ENCODE measurements at regions of chr7 and their contacts with region 1.

Region 1: DNA sequence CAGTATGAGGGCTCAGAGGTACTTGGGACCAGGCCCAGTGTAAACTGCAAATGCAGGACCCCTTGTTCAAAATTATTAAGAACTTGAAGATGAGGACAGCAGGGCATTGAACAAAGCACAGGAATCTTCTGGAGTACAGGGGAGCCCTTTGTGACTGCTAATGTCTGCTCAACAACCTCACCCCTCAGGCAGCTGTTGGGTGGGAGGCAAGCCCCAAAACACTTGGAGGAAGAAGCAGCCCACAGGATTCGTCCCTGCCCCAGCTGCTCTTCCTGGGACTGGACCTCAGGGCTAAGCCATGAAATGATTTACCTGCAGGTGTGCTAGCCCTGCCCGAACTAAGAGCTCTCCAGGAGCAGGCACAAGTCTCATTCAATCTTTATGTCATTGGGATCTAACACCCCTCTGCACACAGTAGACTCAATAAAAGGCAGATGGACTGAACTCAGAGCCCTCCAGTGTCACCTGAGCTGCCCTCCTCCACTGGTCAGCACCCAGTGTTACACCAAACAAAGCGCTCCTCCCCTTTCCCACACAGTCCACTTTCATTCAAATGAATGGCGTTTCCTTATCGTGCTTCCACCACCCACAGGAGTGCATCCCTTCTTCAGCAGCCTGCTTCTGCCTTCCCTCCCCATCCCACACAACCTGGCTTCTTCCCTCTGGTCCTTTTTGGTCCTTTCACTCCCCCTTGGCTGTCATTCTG is 1.0 kb downstream of the TRPV5 start:
- DNase-seq: no peak
- H3K4me3 ChIP-seq: no peak overlapping the region
- H3K27ac ChIP-seq: no peak overlapping the region
- H3K4me1 ChIP-seq: peaks cover 0 to 5% (median 2%) of the 10 kb centered on the region in 4 experiments; a peak in 3 of 7 replicates
- H3K27me3 ChIP-seq: no peaks in the 10 kb centered on the region; a peak in 2 of 7 replicates
- CTCF ChIP-seq: no peak
- EP300 ChIP-seq: no peak
- POLR2A ChIP-seq: no peak
- RAD21 ChIP-seq: no peak

Region 2: GRCh38 chr7:142357953-142358520 is 574.5 kb before region 1 on chr7:
- CTCF ChIA-PET with region 1: no interaction called
- POLR2A ChIA-PET with region 1: no interaction called
- DNase-seq: peak in 1 of 2 experiments; percentile 56
- H3K4me3 ChIP-seq: no peak overlapping the region
- H3K27ac ChIP-seq: no peak overlapping the region
- H3K4me1 ChIP-seq: peaks cover 5 to 13% (median 9%) of the 10 kb centered on the region in 4 experiments; a peak in 5 of 7 replicates
- H3K27me3 ChIP-seq: no peaks in the 10 kb centered on the region
- CTCF ChIP-seq: peak; percentile 32 to 86 (median 86)
- EP300 ChIP-seq: no peak
- POLR2A ChIP-seq: no peak
- RAD21 ChIP-seq: peak; percentile 78 to 88

Region 3: GRCh38 chr7:142908921-142909890 is 23.3 kb before region 1 on chr7:
- CTCF ChIA-PET with region 1: interaction called, 13 read pairs
- POLR2A ChIA-PET with region 1: interaction called, 3 read pairs
- DNase-seq: no peak
- H3K4me3 ChIP-seq: no peak overlapping the region
- H3K27ac ChIP-seq: no peak overlapping the region
- H3K4me1 ChIP-seq: no peaks in the 10 kb centered on the region
- H3K27me3 ChIP-seq: no peaks in the 10 kb centered on the region
- CTCF ChIP-seq: peak; percentile 41 to 72 (median 53)
- EP300 ChIP-seq: no peak
- POLR2A ChIP-seq: no peak
- RAD21 ChIP-seq: peak; percentile 43 to 55

Region 4: DNA sequence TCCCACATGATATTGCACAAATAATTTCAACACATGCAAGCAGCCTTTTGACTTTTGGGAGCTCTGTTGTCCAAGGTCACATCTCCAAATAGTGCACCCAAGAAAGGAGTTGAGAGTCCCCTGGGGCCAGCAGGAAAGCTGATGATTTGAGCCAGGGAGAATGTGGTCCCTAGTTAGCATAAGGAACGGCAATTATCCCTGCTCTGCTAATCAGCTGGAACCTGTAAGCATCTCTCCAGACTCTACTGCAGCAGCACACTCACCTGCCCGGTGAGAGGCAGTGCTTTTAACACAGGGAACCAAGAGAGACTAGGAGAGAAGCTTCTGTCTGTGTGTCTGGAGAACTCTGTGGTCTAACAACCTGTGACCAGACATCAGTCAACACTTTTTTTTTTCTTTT is 16.0 kb before region 1 on chr7:
- CTCF ChIA-PET with region 1: interaction called, 13 read pairs
- POLR2A ChIA-PET with region 1: interaction called, 3 read pairs
- DNase-seq: no peak
- H3K4me3 ChIP-seq: no peak overlapping the region
- H3K27ac ChIP-seq: no peak overlapping the region
- H3K4me1 ChIP-seq: no peaks in the 10 kb centered on the region
- H3K27me3 ChIP-seq: no peaks in the 10 kb centered on the region
- CTCF ChIP-seq: no peak
- EP300 ChIP-seq: no peak
- POLR2A ChIP-seq: no peak
- RAD21 ChIP-seq: no peak

Region 5: GRCh38 chr7:143073556-143073955 is 141.0 kb after region 1 on chr7:
- CTCF ChIA-PET with region 1: no interaction called
- POLR2A ChIA-PET with region 1: no interaction called
- DNase-seq: no peak
- H3K4me3 ChIP-seq: no peak overlapping the region
- H3K27ac ChIP-seq: no peak overlapping the region
- H3K4me1 ChIP-seq: peaks cover 0 to 6% (median 2%) of the 10 kb centered on the region in 4 experiments; a peak in 2 of 7 replicates
- H3K27me3 ChIP-seq: peaks cover 0 to 1% (median 0%) of the 10 kb centered on the region in 4 experiments; a peak in 1 of 7 replicates
- CTCF ChIP-seq: no peak
- EP300 ChIP-seq: no peak
- POLR2A ChIP-seq: no peak
- RAD21 ChIP-seq: no peak

Measured in H1 (cell line).